CD4-positive, alpha-beta T cell (primary cell): ENCODE measurements at regions of chr2 and their contacts with region 1.

Region 1: GRCh38 chr2:27032495-27033252 is at the start of gene TMEM214:
- DNase-seq: peak; percentile 55 to 86 (median 74)
- ATAC-seq: peak; percentile 94
- H3K4me3 ChIP-seq: peak within 1 kb of the TSS; percentile 92
- H3K4me3 Mint-ChIP-seq: peak within 1 kb of the TSS; percentile 96
- H3K27ac ChIP-seq: peak within 1 kb of the TSS; percentile 64 to 73
- H3K27ac Mint-ChIP-seq: peak within 1 kb of the TSS; percentile 83
- H3K4me1 ChIP-seq: peaks cover 36% of the 10 kb centered on the region
- H3K4me1 Mint-ChIP-seq: peaks cover 45% of the 10 kb centered on the region
- H3K27me3 ChIP-seq: no peaks in the 10 kb centered on the region
- H3K27me3 Mint-ChIP-seq: no peaks in the 10 kb centered on the region
- CTCF ChIP-seq: no peak
- total RNA-seq, gene TMEM214: 22.0 to 24.6 TPM

Region 2: GRCh38 chr2:26901326-26902183 is 131.1 kb before region 1 on chr2:
- CTCF ChIA-PET with region 1: no interaction called
- POLR2A ChIA-PET with region 1: no interaction called
- intact Hi-C with region 1: no loop called
- DNase-seq: no peak
- ATAC-seq: no peak
- H3K4me3 ChIP-seq: no peak overlapping the region
- H3K4me3 Mint-ChIP-seq: no peak overlapping the region
- H3K27ac ChIP-seq: no peak overlapping the region
- H3K27ac Mint-ChIP-seq: no peak overlapping the region
- H3K4me1 ChIP-seq: no peaks in the 10 kb centered on the region
- H3K4me1 Mint-ChIP-seq: no peaks in the 10 kb centered on the region
- H3K27me3 ChIP-seq: no peaks in the 10 kb centered on the region
- H3K27me3 Mint-ChIP-seq: no peaks in the 10 kb centered on the region
- CTCF ChIP-seq: no peak

Region 3: GRCh38 chr2:26970244-26970920 is 62.3 kb before region 1 on chr2 and contains the start of gene MAPRE3:
- CTCF ChIA-PET with region 1: no interaction called
- POLR2A ChIA-PET with region 1: interaction called, 4 read pairs
- intact Hi-C with region 1: loop called in 1 of 2 experiments (anchors 5 kb)
- DNase-seq: peak; percentile 51 to 97 (median 74)
- ATAC-seq: peak; percentile 83
- H3K4me3 ChIP-seq: peak within 1 kb of the TSS; percentile 76
- H3K4me3 Mint-ChIP-seq: peak within 1 kb of the TSS; percentile 95
- H3K27ac ChIP-seq: no peak within 1 kb of the TSS
- H3K27ac Mint-ChIP-seq: peak within 1 kb of the TSS; percentile 55
- H3K4me1 ChIP-seq: peaks cover 20% of the 10 kb centered on the region
- H3K4me1 Mint-ChIP-seq: peaks cover 30% of the 10 kb centered on the region
- H3K27me3 ChIP-seq: peaks cover 3 to 10% of the 10 kb centered on the region in 2 experiments
- H3K27me3 Mint-ChIP-seq: peaks cover 27% of the 10 kb centered on the region
- CTCF ChIP-seq: no peak
- total RNA-seq, gene MAPRE3: 3.4 to 4.5 TPM

Region 4: DNA sequence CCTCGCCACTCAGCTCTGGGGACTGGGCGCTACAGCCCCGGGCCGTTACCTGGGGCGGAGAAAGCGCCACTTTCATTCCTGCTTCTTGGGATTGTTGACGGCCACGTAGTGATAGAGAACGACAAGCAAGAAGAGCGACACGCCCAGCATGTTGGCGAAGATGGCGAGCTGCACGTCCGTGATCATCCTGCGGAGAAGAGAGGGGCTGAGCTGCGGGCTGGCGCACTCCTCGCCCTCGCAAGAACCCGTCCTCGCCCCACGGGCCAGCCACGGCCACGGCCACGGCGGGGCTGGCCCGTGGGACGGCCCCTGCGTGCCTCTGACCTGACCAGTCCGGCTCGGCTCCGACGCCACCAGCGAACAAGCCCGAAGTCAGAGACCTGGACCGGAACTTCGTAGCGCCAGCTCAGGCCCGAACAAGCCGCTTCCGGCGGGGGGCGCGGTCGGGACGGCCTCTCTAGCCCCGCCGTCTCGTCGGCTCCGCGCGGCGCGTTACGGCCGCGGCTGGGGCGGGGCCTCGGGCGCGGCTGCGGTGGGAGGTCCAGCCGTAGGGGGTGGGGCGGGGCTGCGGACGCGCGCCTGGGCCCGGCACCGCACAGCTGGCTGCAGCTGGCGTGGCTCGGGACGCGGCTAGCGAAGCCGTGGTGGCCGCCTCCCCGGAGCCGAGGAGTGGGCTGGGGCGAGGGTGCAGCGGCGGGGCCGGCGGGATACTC is 38.8 kb after region 1 on chr2 and contains the start of gene OST4:
- CTCF ChIA-PET with region 1: no interaction called
- POLR2A ChIA-PET with region 1: interaction called, 8 read pairs
- intact Hi-C with region 1: loop called in 1 of 2 experiments (anchors 2 kb)
- DNase-seq: peak; percentile 76 to 95 (median 86)
- ATAC-seq: peak; percentile 86
- H3K4me3 ChIP-seq: peak within 1 kb of the TSS; percentile 99
- H3K4me3 Mint-ChIP-seq: peak within 1 kb of the TSS; percentile 99
- H3K27ac ChIP-seq: peak within 1 kb of the TSS; percentile 90 to 91
- H3K27ac Mint-ChIP-seq: peak within 1 kb of the TSS; percentile 98
- H3K4me1 ChIP-seq: peaks cover 74% of the 10 kb centered on the region
- H3K4me1 Mint-ChIP-seq: peaks cover 84% of the 10 kb centered on the region
- H3K27me3 ChIP-seq: no peaks in the 10 kb centered on the region
- H3K27me3 Mint-ChIP-seq: no peaks in the 10 kb centered on the region
- CTCF ChIP-seq: no peak
- total RNA-seq, gene OST4: 232 to 254 TPM

Region 5: DNA sequence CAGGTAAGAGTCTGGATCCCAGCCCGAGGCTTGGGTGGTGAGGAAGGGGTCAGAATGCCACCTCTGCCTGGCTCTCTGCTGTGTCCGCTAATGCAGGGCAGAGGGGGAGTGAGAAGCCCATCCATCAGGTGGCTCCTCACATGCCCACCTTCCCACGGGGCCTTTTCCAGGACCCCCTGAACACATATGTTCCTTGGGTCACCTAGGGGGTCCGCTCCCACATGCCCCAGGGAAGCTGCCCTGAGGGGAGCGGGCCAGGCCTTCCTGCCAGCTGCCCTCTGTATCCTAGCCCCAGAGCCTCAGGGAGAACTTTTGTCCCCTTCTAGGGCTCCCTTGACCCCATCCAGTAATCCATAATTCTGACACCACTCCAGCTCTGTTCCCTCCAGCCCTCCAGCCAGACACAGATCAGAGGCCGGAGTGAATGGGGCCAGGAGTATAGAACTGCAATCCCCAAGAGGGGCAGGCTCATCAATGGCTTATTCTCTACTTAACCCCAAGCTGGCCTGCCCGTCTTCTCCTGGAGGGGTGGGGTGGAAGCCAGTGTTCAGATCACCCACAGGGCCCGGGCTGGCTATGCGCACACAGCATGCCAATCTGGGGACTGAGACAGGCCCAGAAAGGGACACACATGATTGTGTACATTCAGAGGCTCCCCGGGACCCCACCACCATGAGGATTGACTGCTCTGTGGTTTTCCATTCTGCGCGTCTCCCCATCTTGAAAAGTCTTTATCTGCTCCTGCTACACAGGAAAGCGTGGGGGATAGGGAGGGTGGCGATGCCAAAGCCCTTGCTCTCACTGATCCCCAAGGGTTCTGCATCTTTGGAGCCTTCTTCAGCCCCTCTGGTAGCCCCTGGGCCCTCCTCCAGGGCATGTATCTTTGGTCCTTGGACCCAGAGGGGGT is 46.8 kb after region 1 on chr2:
- CTCF ChIA-PET with region 1: no interaction called
- POLR2A ChIA-PET with region 1: interaction called, 5 read pairs
- intact Hi-C with region 1: loop called in 1 of 2 experiments (anchors 2 kb)
- DNase-seq: no peak
- ATAC-seq: no peak
- H3K4me3 ChIP-seq: no peak overlapping the region
- H3K4me3 Mint-ChIP-seq: no peak overlapping the region
- H3K27ac ChIP-seq: no peak overlapping the region
- H3K27ac Mint-ChIP-seq: no peak overlapping the region
- H3K4me1 ChIP-seq: peaks cover 44% of the 10 kb centered on the region
- H3K4me1 Mint-ChIP-seq: peaks cover 46% of the 10 kb centered on the region
- H3K27me3 ChIP-seq: no peaks in the 10 kb centered on the region
- H3K27me3 Mint-ChIP-seq: no peaks in the 10 kb centered on the region
- CTCF ChIP-seq: no peak